CD8-positive, alpha-beta T cell (primary cell): ENCODE measurements at regions of chr19 and their contacts with region 1.

Region 1: GRCh38 chr19:19138169-19138981 is at the start of gene TMEM161A:
- DNase-seq: peak; percentile 88 to 98 (median 96)
- ATAC-seq: peak; percentile 99
- H3K4me3 ChIP-seq: peak within 1 kb of the TSS; percentile 78 to 95
- H3K4me3 Mint-ChIP-seq: peak within 1 kb of the TSS; percentile 95
- H3K27ac ChIP-seq: peak within 1 kb of the TSS; percentile 64 to 77
- H3K27ac Mint-ChIP-seq: peak within 1 kb of the TSS; percentile 92
- H3K4me1 ChIP-seq: peaks cover 14% of the 10 kb centered on the region
- H3K4me1 Mint-ChIP-seq: peaks cover 34% of the 10 kb centered on the region
- H3K27me3 ChIP-seq: no peaks in the 10 kb centered on the region
- H3K27me3 Mint-ChIP-seq: no peaks in the 10 kb centered on the region
- CTCF ChIP-seq: no peak
- total RNA-seq, gene TMEM161A: 9.4 to 9.9 TPM

Region 2: DNA sequence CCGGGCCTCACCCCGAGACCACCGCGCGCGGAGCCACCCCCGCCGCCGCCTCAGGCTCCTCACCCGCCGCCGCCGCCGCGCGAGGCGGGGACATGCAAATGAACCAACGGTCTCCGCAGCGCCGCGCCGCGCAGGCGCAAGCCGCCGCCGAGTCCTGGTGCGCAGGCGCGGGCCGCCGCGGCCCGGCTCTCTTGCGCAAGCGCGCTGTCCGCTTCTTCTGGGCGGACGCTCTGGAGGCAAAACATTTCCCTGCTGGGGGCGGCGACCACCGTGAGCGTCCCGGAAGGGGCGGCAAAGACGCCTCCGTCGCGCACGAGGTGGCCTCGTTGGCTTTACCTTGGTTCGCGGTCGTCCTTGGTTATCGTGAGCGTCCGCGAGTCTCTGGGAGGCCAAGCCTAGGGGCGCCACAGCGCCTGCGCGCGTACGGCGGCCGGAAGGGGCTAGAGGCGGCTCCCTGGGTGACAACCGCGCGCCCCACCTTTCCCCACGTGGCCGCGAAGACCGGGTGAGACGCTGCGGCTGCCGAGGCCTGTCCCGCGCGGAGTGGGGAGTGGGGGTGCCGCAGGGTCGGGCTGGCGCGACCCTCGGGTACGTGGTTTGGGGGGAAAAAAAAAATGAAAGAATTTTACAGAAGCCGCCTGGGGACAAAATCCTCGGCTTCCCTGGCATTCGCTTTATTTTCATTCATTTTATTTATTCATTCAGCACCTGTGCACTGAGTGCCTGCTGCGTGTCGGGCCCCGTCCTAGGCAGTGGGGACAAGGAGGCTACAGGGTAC is 104.8 kb before region 1 on chr19 and contains the starts of genes ARMC6 and SUGP2:
- CTCF ChIA-PET with region 1: no interaction called
- POLR2A ChIA-PET with region 1: no interaction called
- intact Hi-C with region 1: loop called (anchors 1 to 5 kb)
- DNase-seq: peak; percentile 79 to 95 (median 89)
- ATAC-seq: peak; percentile 68
- H3K4me3 ChIP-seq: peak within 1 kb of the TSS; percentile 71 to 81
- H3K4me3 Mint-ChIP-seq: peak within 1 kb of the TSS; percentile 97
- H3K27ac ChIP-seq: peak within 1 kb of the TSS; percentile 65 to 85
- H3K27ac Mint-ChIP-seq: peak within 1 kb of the TSS; percentile 97
- H3K4me1 ChIP-seq: peaks cover 18% of the 10 kb centered on the region
- H3K4me1 Mint-ChIP-seq: peaks cover 33% of the 10 kb centered on the region
- H3K27me3 ChIP-seq: no peaks in the 10 kb centered on the region
- H3K27me3 Mint-ChIP-seq: no peaks in the 10 kb centered on the region
- CTCF ChIP-seq: no peak
- total RNA-seq, gene ARMC6: 4.6 to 5.3 TPM
- total RNA-seq, gene SUGP2: 85.4 to 90.8 TPM

Region 3: DNA sequence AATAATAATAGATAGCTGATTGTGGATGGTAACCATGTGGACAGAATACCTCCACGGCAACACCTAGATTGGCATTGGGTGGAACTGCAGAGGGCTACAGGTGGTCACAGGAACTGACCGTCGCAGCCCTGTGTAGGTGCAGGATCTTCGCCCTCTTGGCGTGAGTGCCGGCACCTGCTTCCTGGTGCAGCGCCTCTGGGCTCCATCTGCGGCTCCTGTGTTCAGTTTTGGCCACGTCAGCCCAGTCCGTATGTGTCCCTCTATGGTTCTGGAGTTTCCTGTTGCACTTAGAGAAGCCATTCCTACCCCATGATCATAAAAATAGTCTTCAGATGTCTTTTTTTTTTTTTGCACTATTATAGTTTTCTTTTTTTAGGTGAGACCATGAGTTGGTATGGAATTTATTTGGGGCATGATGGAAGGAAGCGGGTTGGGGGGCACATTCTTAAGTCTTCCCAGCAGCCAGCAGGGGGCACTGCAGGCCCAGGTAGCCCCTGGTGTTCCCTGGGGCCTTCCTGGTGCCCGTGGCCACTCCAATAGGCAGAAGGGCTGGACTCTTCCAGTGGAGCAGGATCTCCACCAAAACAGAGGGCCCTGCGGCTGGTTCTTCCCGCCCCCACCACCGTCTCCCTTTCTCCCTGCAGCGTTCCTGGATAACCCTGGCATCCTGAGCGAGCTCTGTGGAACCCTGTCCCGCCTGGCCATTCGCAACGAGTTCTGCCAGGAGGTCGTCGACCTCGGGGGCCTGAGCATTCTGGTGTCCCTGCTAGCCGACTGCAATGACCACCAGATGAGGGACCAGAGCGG is 84.7 kb before region 1 on chr19:
- CTCF ChIA-PET with region 1: interaction called, 67 read pairs
- POLR2A ChIA-PET with region 1: interaction called, 3 read pairs
- intact Hi-C with region 1: loop called (anchors 1 kb)
- DNase-seq: peak; percentile 37 to 81 (median 68)
- ATAC-seq: peak; percentile 81
- H3K4me3 ChIP-seq: no peak overlapping the region
- H3K4me3 Mint-ChIP-seq: no peak overlapping the region
- H3K27ac ChIP-seq: no peak overlapping the region
- H3K27ac Mint-ChIP-seq: no peak overlapping the region
- H3K4me1 ChIP-seq: no peaks in the 10 kb centered on the region
- H3K4me1 Mint-ChIP-seq: no peaks in the 10 kb centered on the region
- H3K27me3 ChIP-seq: no peaks in the 10 kb centered on the region
- H3K27me3 Mint-ChIP-seq: no peaks in the 10 kb centered on the region
- CTCF ChIP-seq: peak; percentile 73

Region 4: DNA sequence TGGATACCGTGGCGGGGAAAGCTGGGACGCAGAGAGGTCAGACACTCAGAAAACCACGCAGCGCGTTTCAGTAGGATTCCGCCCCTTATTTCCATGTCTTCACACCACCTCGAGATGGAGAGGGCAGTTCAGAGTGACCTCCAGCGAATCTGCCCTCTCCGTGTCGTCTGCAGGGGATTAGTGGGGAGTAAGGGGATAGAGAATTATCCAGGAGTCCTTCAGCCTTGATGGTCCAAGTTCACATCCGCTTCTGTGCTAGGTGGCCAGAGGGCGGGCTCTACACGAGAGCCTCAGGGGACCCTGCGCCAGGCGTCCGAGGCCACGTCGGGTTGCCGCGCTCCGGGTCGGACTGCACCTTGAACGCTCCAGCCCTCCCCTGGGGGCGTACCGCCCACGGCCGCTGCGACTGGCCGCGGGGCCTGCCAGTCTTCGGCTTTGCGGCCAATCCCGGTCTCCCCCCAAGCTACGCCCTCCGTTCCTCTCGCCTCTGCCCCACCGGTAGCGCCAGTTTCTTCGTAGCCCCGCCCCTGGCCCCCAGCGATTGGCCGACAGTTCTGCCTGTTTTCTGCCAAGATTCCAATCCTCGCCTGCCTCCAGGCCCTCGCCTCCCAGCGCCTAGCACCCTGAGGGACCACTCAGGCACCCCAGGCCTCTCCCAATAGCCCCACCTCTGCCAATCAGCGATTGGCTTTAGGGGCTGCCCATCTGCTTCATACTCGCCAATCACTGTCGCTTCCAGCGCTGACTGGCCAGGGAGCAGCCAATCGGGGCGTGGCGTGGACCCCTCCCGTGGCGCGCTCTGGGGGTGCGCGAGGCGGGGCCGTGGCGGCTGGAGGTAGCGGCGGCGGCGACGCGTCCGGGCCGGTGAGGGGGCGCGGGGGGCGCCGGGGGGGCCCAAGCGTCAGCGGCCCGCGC is 74.9 kb before region 1 on chr19 and contains the start of gene SLC25A42:
- CTCF ChIA-PET with region 1: interaction called, 3 read pairs
- POLR2A ChIA-PET with region 1: interaction called, 4 read pairs
- intact Hi-C with region 1: loop called (anchors 1 kb)
- DNase-seq: peak; percentile 97 to 100 (median 99)
- ATAC-seq: peak; percentile 90
- H3K4me3 ChIP-seq: peak within 1 kb of the TSS; percentile 61 to 87
- H3K4me3 Mint-ChIP-seq: peak within 1 kb of the TSS; percentile 89
- H3K27ac ChIP-seq: peak within 1 kb of the TSS; percentile 47 to 77
- H3K27ac Mint-ChIP-seq: peak within 1 kb of the TSS; percentile 88
- H3K4me1 ChIP-seq: peaks cover 23% of the 10 kb centered on the region
- H3K4me1 Mint-ChIP-seq: peaks cover 32% of the 10 kb centered on the region
- H3K27me3 ChIP-seq: no peaks in the 10 kb centered on the region
- H3K27me3 Mint-ChIP-seq: no peaks in the 10 kb centered on the region
- CTCF ChIP-seq: no peak
- total RNA-seq, gene SLC25A42: 8.3 to 10.6 TPM

Region 5: GRCh38 chr19:19087676-19088075 is 50.7 kb before region 1 on chr19:
- CTCF ChIA-PET with region 1: no interaction called
- POLR2A ChIA-PET with region 1: no interaction called
- intact Hi-C with region 1: no loop called
- DNase-seq: no peak
- ATAC-seq: no peak
- H3K4me3 ChIP-seq: no peak overlapping the region
- H3K4me3 Mint-ChIP-seq: no peak overlapping the region
- H3K27ac ChIP-seq: no peak overlapping the region
- H3K27ac Mint-ChIP-seq: no peak overlapping the region
- H3K4me1 ChIP-seq: no peaks in the 10 kb centered on the region
- H3K4me1 Mint-ChIP-seq: peaks cover 4% of the 10 kb centered on the region
- H3K27me3 ChIP-seq: no peaks in the 10 kb centered on the region
- H3K27me3 Mint-ChIP-seq: no peaks in the 10 kb centered on the region
- CTCF ChIP-seq: no peak

Region 6: DNA sequence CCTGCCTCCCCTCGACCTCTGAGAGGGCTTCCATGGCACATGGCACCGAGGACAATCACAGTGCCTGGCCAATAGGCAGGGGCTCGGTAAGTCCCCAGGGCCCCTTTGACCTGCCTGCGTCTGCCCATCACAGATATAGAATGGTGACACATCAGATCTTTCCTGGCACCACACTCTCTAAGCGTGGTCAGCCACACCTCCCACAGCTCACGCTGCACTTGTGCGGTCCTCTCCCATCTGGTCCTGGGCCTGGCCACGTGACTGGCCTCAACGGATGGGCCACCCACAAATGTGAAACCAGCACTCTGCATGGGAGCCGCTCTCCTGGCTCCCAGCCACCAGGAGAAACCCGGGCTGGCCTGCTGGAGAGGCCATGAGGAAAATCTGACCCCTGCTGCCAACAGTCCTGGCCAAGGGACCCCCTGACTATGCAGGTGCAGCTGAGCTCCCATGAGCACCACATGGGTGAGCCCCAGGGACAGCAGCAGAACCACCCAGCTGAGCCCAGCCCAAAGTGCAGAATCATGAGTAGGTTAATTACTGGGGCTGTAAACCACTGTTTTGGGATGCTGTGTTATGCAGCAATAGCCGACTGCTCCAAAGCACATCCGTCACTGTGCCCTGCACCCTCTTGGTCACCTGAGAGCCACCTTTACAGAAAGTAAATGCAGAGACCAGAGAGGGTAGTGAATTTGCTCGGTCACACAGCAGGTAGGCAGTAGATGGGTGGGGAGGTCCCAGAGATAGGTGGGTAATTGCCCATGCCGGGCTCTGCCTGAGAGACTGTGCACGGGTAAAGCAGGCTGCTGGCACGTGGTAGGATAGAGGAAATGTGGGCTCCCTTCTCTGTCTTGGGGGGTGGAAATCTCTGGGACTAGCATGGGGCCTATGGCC is 41.4 kb after region 1 on chr19:
- CTCF ChIA-PET with region 1: interaction called, 27 read pairs
- POLR2A ChIA-PET with region 1: no interaction called
- intact Hi-C with region 1: loop called in 1 of 2 experiments (anchors 5 kb)
- DNase-seq: no peak
- ATAC-seq: no peak
- H3K4me3 ChIP-seq: no peak overlapping the region
- H3K4me3 Mint-ChIP-seq: no peak overlapping the region
- H3K27ac ChIP-seq: no peak overlapping the region
- H3K27ac Mint-ChIP-seq: no peak overlapping the region
- H3K4me1 ChIP-seq: no peaks in the 10 kb centered on the region
- H3K4me1 Mint-ChIP-seq: peaks cover 3% of the 10 kb centered on the region
- H3K27me3 ChIP-seq: no peaks in the 10 kb centered on the region
- H3K27me3 Mint-ChIP-seq: no peaks in the 10 kb centered on the region
- CTCF ChIP-seq: no peak

Region 7: DNA sequence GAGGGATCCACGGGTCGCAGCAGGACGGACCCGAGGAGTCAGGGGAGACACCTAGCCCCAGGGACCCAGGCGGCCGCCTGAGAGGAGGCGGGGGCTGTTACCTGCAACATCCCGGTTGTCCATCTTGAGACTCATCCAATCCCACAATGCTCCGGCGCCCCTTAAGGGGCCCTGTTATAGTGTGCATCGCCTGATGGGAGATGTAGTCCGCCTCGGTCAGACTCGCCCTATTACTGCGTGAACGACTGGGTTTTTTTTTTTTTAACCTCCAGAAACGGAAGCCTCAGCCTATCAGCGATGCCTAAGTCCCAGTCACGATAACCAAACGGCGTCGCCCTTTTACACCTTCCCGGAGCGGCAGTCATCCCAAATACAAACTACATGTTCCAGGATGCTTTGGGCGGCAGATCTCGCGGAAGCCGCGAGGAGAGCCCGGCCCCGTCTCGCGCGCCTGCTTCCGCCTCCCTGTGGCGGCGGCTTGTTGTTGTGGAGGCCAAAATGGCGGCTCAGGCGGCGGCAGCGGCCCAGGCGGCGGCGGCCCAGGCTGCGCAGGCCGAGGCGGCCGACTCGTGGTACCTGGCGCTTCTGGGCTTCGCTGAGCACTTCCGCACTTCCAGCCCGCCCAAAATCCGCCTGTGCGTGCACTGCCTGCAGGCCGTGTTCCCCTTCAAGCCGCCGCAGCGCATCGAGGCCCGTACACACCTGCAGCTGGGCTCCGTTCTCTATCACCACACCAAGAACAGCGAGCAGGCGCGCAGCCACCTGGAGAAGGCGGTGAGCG is 182.2 kb after region 1 on chr19 and contains the starts of genes MAU2 and SUGP1:
- CTCF ChIA-PET with region 1: no interaction called
- POLR2A ChIA-PET with region 1: no interaction called
- intact Hi-C with region 1: loop called in 1 of 2 experiments (anchors 5 kb)
- DNase-seq: peak; percentile 81 to 95 (median 88)
- ATAC-seq: peak; percentile 90
- H3K4me3 ChIP-seq: peak within 1 kb of the TSS; percentile 88 to 94
- H3K4me3 Mint-ChIP-seq: peak within 1 kb of the TSS; percentile 99
- H3K27ac ChIP-seq: peak within 1 kb of the TSS; percentile 88 to 97
- H3K27ac Mint-ChIP-seq: peak within 1 kb of the TSS; percentile 99
- H3K4me1 ChIP-seq: peaks cover 35% of the 10 kb centered on the region
- H3K4me1 Mint-ChIP-seq: peaks cover 40% of the 10 kb centered on the region
- H3K27me3 ChIP-seq: no peaks in the 10 kb centered on the region
- H3K27me3 Mint-ChIP-seq: no peaks in the 10 kb centered on the region
- CTCF ChIP-seq: no peak
- total RNA-seq, gene MAU2: 137 to 139 TPM
- total RNA-seq, gene SUGP1: 60.9 to 68.2 TPM

Region 8: DNA sequence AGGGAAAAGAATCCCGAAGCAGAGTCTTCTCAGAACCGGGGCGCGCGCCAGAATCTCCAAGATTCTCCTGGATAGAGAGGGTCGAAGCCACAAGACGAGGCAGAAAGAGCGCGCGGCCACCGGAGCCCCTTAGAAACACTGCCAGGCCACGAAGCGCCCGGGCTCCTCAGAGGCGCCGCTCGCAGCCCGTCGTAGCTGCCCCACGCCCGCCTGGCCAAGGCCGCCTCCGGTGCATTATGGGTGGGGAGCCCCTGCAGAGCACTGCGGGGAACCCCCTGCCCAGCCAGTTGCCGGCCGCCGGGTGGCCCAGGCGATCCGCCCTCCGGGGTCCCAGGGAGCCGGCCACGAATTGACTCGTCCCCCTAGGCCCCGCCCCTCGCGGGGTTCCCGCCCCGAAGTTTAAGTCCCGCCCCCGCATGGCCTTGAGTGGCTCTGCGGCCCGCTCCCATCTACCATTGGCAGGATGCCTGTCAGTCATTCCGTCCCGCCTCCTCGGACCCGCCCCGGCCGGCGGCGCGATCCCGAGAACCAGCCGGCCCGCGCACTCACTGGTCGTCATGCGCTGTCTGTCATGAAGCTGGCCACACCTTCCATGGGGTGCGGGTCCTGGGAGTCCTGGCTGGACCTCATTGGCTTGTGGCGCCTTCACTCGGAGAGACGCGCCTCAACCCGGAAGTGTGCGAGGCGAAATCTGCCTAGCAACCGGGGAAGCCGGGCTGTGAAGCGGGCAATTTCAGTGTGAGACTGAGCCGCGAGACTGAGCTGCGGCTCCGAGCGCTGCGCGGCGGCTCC is 246.9 kb after region 1 on chr19:
- CTCF ChIA-PET with region 1: no interaction called
- POLR2A ChIA-PET with region 1: no interaction called
- intact Hi-C with region 1: loop called in 1 of 2 experiments (anchors 1 kb)
- DNase-seq: peak; percentile 99 to 100 (median 99)
- ATAC-seq: peak; percentile 86
- H3K4me3 ChIP-seq: peak overlapping the region; percentile 73 to 84
- H3K4me3 Mint-ChIP-seq: peak overlapping the region; percentile 93
- H3K27ac ChIP-seq: peak overlapping the region; percentile 71 to 88
- H3K27ac Mint-ChIP-seq: peak overlapping the region; percentile 92
- H3K4me1 ChIP-seq: peaks cover 45% of the 10 kb centered on the region
- H3K4me1 Mint-ChIP-seq: peaks cover 39% of the 10 kb centered on the region
- H3K27me3 ChIP-seq: no peaks in the 10 kb centered on the region
- H3K27me3 Mint-ChIP-seq: no peaks in the 10 kb centered on the region
- CTCF ChIP-seq: no peak